ENCODE measurements at regions of chr1 and their contacts with region 1.

Region 1: DNA sequence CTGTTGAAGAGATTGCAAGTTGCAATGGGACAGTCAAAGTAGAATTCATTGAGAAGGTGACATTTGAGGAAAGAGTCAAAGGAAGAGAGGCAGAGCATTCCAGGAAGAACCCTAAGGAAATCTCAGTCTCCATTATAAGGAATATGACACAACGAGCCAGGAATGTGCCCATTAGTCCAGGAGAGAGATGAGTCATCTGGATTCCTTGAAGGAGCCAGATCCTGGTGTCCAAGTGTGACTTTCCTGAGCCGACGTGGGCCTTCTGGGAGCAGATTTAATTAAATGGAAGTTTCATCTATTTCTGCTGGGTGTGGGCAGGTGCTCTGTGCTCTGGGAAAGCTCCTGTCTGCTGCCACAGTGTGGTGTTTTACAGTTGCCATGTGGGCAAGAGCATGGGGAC is 111.6 kb upstream of the ARTN start:
- DNase-seq: peak in 1 of 2 donors; percentile 76
- H3K4me3 ChIP-seq: no peak overlapping the region
- H3K27ac ChIP-seq: peak overlapping the region; percentile 53 to 65
- H3K4me1 ChIP-seq: peaks cover 0 to 8% of the 10 kb centered on the region in 2 donors
- H3K27me3 ChIP-seq: no peaks in the 10 kb centered on the region
- CTCF ChIP-seq: no peak

Region 2: GRCh38 chr1:43541734-43542401 is 280.2 kb before region 1 on chr1:
- intact Hi-C with region 1: loop called (anchors 5 kb)
- DNase-seq: peak; percentile 65 to 90
- H3K4me3 ChIP-seq: no peak overlapping the region
- H3K27ac ChIP-seq: peak overlapping the region; percentile 85 to 89
- H3K4me1 ChIP-seq: peaks cover 17 to 39% of the 10 kb centered on the region in 2 donors
- H3K27me3 ChIP-seq: no peaks in the 10 kb centered on the region
- CTCF ChIP-seq: no peak

Region 3: DNA sequence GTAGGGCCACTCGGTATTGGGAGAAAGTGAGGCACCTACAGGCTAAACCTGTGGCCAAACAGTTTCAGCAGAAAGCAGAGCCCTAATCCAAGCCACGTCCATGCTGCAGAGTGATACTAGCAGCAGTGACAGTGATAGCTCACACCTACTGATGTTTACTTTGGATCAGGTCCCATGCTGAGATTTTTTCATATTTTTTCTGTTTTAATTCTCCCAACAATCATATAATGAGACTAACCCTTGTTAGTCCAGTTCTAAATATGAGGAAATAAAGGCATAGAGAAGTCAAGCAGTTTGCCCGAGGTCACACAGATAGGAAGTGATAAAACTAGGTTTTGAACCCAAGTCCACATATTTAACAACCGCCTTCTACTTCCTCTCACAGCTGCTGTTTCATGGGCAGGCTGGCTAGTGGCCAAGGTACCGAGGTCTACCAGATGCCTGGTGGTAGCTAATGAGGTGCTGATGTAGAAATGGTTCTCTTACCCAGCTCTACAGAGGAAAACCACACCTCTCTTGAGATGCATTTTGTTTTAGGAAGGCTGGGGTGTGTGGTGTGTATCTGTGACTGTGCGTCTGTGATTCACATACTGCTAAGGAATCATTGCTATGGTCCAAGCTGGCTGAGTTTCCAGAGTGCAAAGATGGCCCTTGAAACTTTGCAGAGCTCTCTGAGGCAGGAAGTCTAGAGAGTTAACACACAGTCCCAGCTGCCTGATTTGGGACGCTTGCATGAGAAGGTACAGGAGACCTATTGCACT is 31.3 kb after region 1 on chr1:
- intact Hi-C with region 1: no loop called
- DNase-seq: no peak
- H3K4me3 ChIP-seq: no peak overlapping the region
- H3K27ac ChIP-seq: no peak overlapping the region
- H3K4me1 ChIP-seq: peaks cover 0 to 2% of the 10 kb centered on the region in 2 donors
- H3K27me3 ChIP-seq: no peaks in the 10 kb centered on the region
- CTCF ChIP-seq: no peak

Region 4: GRCh38 chr1:43974443-43975248 is 152.6 kb after region 1 on chr1 and contains the start of gene ATP6V0B:
- intact Hi-C with region 1: no loop called
- DNase-seq: peak; percentile 87 to 97
- H3K4me3 ChIP-seq: peak within 1 kb of the TSS; percentile 71 to 78
- H3K27ac ChIP-seq: peak within 1 kb of the TSS; percentile 84 to 89
- H3K4me1 ChIP-seq: peaks cover 17 to 35% of the 10 kb centered on the region in 2 donors
- H3K27me3 ChIP-seq: no peaks in the 10 kb centered on the region
- CTCF ChIP-seq: peak in 2 of 3 experiments; percentile 11 to 46
- total RNA-seq, gene ATP6V0B: 115 TPM